Prostate gland (tissue), 2 donors: ENCODE measurements at regions of chr4 and their contacts with region 1.

Region 1: DNA sequence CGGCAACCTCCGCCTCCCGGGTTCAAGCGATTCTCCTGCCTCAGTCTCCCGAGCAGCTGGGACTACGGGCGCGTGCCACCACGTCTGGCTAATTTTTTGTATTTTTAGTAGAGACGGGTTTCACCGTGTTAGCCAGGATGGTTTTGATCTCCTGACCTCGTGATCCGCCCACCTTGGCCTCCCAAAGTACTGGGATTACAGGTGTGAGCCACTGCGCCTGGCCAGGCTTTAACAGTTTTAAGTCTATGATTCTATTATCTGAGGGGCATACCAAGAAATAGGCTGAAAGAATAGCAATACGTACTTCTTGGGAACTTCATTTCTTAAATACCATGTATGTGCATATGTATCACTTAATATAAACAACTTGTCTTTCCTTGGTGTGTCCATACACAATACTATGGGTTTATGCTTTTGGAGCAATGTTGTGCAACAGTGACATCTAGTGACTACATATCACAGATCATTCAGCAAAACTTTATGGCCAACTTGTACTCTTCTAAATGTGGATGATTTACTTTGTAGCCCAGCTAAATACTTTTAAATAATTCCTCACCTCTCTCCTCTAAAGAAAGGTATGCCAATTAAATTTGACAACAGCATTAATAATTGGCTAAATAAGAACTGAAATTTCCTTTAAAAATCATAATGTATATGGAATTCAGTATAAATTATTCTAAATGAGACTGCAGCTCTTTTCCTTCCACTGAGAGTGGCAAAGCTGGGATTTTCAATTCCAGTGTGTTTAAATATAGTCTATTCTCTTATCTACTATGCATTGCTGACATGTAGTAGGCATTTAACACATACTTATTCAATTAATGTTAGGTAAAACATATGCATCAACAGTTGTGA is 10.4 kb downstream of the SLC9B1 start:
- DNase-seq: peak; percentile 42
- H3K4me3 ChIP-seq: no peak overlapping the region
- H3K27ac ChIP-seq: no peak overlapping the region
- H3K4me1 ChIP-seq: no peaks in the 10 kb centered on the region
- H3K27me3 ChIP-seq: no peaks in the 10 kb centered on the region
- CTCF ChIP-seq: peak; percentile 29 to 86 (median 74)
- POLR2A ChIP-seq: no peak

Region 2: GRCh38 chr4:102439236-102439614 is 569.9 kb before region 1 on chr4:
- intact Hi-C with region 1: loop called (anchors 5 kb)
- DNase-seq: peak; percentile 44
- H3K4me3 ChIP-seq: no peak overlapping the region
- H3K27ac ChIP-seq: no peak overlapping the region
- H3K4me1 ChIP-seq: no peaks in the 10 kb centered on the region
- H3K27me3 ChIP-seq: no peaks in the 10 kb centered on the region
- CTCF ChIP-seq: no peak
- POLR2A ChIP-seq: no peak

Region 3: GRCh38 chr4:102620697-102621497 is 388.2 kb before region 1 on chr4:
- intact Hi-C with region 1: loop called (anchors 2 kb)
- DNase-seq: no peak
- H3K4me3 ChIP-seq: no peak overlapping the region
- H3K27ac ChIP-seq: no peak overlapping the region
- H3K4me1 ChIP-seq: no peaks in the 10 kb centered on the region
- H3K27me3 ChIP-seq: no peaks in the 10 kb centered on the region
- CTCF ChIP-seq: peak in 3 of 4 experiments; percentile 47 to 77 (median 70)
- POLR2A ChIP-seq: no peak